Motor neuron (in vitro differentiated cells): ENCODE measurements at regions of chr10 and their contacts with region 1.

Region 1: DNA sequence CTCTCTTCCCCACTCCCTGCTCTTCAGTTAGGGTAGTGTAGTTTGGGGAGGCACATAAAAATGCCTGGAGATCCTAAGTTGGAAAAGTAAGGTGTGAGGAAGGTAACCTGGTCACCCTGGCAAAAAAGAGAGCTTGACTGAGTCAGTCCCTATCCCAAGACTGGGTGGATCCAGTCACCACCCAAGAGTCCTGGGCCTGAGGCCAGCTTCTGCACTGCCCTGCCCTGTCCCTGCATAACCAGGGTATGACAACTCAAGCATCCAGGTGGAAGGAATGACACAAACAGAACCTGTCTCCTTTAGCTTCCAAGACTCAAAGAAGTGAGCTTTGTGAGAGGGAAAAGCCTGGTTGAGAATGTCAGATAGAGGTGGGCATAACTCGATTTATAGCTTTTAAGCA is 26.9 kb upstream of the SORBS1 start:
- ATAC-seq: peak in 2 of 8 experiments; percentile 83 to 91
- H3K4me3 ChIP-seq: no peak overlapping the region
- H3K27ac ChIP-seq: no peak overlapping the region
- H3K4me1 ChIP-seq: no peaks in the 10 kb centered on the region

Region 2: DNA sequence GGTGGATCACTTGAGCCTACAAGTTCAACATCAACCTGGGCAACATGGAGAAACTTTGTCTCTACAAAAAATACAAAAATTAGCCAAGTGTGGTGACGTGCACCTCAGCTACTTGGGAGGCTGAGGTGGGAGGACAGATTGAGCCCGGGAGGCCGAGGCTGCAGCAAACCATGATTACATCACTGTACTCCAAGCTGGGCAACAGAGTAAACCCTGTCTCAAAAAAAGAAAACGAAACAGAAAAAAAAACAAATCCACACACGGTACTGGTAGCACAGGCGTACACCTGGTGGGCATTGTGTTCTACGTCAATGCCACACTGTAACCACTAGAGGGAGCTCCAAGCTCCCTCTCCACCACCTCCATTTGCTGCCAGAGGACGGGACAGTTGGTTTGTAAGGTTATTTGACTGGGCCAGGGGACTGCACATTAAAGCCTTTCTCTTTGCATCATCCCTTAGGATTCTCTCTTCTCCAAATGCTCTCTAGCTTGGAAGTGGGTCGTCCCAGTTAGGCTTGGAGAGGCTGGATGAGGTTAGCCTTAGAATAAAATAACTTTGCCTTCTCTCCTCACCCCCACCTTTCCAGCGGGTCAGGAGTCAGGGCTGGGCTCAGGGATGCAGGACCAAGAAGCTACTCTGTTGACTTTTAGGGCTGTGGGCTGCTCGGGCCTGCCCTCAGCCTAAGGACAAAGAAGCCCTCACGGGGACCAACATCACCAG is 157.6 kb before region 1 on chr10:
- in situ Hi-C with region 1: loop called in 4 of 9 experiments (anchors 10 to 25 kb)
- ATAC-seq: peak; percentile 83 to 97 (median 91)
- H3K4me3 ChIP-seq: no peak overlapping the region
- H3K27ac ChIP-seq: no peak overlapping the region
- H3K4me1 ChIP-seq: peaks cover 0 to 3% of the 10 kb centered on the region in 2 donors